ENCODE measurements at regions of chr1 and their contacts with region 1.

Region 1: GRCh38 chr1:47313915-47314664 is at the start of gene STIL:
- DNase-seq: peak; percentile 98 to 99
- ATAC-seq: peak; percentile 100
- H3K4me3 ChIP-seq: peak within 1 kb of the TSS; percentile 76
- H3K27ac ChIP-seq: peak within 1 kb of the TSS; percentile 75
- H3K4me1 ChIP-seq: no peaks in the 10 kb centered on the region
- H3K27me3 ChIP-seq: no peaks in the 10 kb centered on the region
- CTCF ChIP-seq: no peak
- total RNA-seq, gene STIL: 0.36 to 0.48 (median 0.43) TPM

Region 2: GRCh38 chr1:47333922-47334764 is 20.1 kb after region 1 on chr1:
- intact Hi-C with region 1: loop called (anchors 2 kb)
- DNase-seq: peak; percentile 86 to 92
- ATAC-seq: peak; percentile 93 to 95 (median 94)
- H3K4me3 ChIP-seq: peak overlapping the region; percentile 88
- H3K27ac ChIP-seq: peak overlapping the region; percentile 97
- H3K4me1 ChIP-seq: peaks cover 32% of the 10 kb centered on the region
- H3K27me3 ChIP-seq: no peaks in the 10 kb centered on the region
- CTCF ChIP-seq: peak; percentile 5